ENCODE measurements at regions of chr3 and their contacts with region 1.

Region 1: DNA sequence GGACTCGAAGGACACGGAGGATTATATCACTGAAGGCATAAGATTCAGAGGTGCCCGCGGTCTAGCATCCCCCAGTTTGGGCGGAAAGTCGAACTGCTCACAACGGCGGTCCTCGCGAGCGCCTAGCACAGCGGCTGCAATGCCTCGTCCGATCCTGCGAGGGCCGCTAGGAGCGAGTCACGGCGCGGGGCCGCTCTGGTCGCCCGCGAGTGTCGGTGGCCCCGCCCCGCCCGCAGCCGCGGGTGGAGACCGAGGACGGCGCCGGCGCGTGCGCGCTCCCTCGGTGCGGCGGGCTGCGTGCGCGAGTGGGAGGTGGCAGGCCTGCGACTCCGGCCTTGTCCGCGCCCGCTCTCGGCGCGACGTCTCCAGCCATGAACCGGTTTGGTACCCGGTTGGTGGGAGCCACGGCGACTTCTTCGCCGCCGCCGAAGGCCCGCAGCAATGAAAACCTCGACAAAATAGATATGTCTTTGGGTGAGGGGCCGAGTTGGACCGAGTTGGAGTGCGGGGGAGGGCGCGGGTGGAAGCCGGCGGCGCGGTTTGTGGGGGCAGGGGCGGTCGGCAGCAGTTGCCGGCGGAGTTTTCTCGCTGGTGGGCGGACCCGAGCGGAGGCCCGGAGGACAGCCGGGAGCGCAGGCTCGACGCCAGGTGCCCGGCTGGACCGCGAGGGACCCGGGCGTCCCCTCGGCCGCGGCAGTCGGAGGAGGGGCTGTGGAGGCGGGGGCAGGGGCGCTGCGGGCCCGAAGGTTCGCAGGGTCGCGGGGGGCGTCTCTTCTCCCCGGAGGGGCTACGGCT is at the start of gene FYTTD1:
- DNase-seq: peak; percentile 50
- ATAC-seq: peak; percentile 91
- H3K4me3 ChIP-seq: peak within 1 kb of the TSS; percentile 75 to 86 (median 77)
- H3K27ac ChIP-seq: peak within 1 kb of the TSS; percentile 56
- H3K4me1 ChIP-seq: peaks cover 37% of the 10 kb centered on the region
- H3K27me3 ChIP-seq: peaks cover 0 to 5% of the 10 kb centered on the region in 2 experiments; a peak in 1 of 5 replicates
- CTCF ChIP-seq: peak; percentile 64
- EP300 ChIP-seq: 0 out of 4 replicates have a peak, but pooled peaks of 1 of the 2 experiments have one; percentile 7
- POLR2A ChIP-seq: peak; percentile 31 to 74; a peak in 3 of 4 replicates
- RAD21 ChIP-seq: peak; percentile 55
- total RNA-seq, gene FYTTD1: 28.8 and 51.6 TPM in 2 replicates

Region 2: GRCh38 chr3:197692641-197693040 is 57.2 kb before region 1 on chr3:
- CTCF ChIA-PET with region 1: no interaction called
- POLR2A ChIA-PET with region 1: no interaction called
- in situ Hi-C with region 1: no loop called
- intact Hi-C with region 1: no loop called
- DNase-seq: no peak
- ATAC-seq: no peak
- H3K4me3 ChIP-seq: no peak overlapping the region
- H3K27ac ChIP-seq: no peak overlapping the region
- H3K4me1 ChIP-seq: no peaks in the 10 kb centered on the region
- H3K27me3 ChIP-seq: no peaks in the 10 kb centered on the region
- CTCF ChIP-seq: no peak
- EP300 ChIP-seq: no peak
- POLR2A ChIP-seq: no peak
- RAD21 ChIP-seq: no peak

Region 3: GRCh38 chr3:197711973-197712707 is 37.7 kb before region 1 on chr3:
- CTCF ChIA-PET with region 1: no interaction called
- POLR2A ChIA-PET with region 1: no interaction called
- in situ Hi-C with region 1: no loop called
- intact Hi-C with region 1: no loop called
- DNase-seq: peak; percentile 28
- ATAC-seq: no peak
- H3K4me3 ChIP-seq: no peak overlapping the region
- H3K27ac ChIP-seq: no peak overlapping the region
- H3K4me1 ChIP-seq: no peaks in the 10 kb centered on the region
- H3K27me3 ChIP-seq: no peaks in the 10 kb centered on the region
- CTCF ChIP-seq: no peak
- EP300 ChIP-seq: no peak
- POLR2A ChIP-seq: no peak
- RAD21 ChIP-seq: no peak

Region 4: GRCh38 chr3:197791113-197791891 is 41.5 kb after region 1 on chr3 and contains the start of gene LRCH3:
- CTCF ChIA-PET with region 1: no interaction called
- POLR2A ChIA-PET with region 1: interaction called, 6 read pairs
- in situ Hi-C with region 1: no loop called
- intact Hi-C with region 1: loop called (anchors 5 kb)
- DNase-seq: peak; percentile 56
- ATAC-seq: peak; percentile 86
- H3K4me3 ChIP-seq: peak within 1 kb of the TSS; percentile 92 to 100 (median 96)
- H3K27ac ChIP-seq: peak within 1 kb of the TSS; percentile 93
- H3K4me1 ChIP-seq: peaks cover 52% of the 10 kb centered on the region
- H3K27me3 ChIP-seq: no peaks in the 10 kb centered on the region; a peak in 1 of 5 replicates
- CTCF ChIP-seq: no peak; the same call in none of the 2 replicates
- EP300 ChIP-seq: no peak
- POLR2A ChIP-seq: peak; percentile 93 to 99
- RAD21 ChIP-seq: no peak
- total RNA-seq, gene LRCH3: 25.5 and 37.8 TPM in 2 replicates

Region 5: DNA sequence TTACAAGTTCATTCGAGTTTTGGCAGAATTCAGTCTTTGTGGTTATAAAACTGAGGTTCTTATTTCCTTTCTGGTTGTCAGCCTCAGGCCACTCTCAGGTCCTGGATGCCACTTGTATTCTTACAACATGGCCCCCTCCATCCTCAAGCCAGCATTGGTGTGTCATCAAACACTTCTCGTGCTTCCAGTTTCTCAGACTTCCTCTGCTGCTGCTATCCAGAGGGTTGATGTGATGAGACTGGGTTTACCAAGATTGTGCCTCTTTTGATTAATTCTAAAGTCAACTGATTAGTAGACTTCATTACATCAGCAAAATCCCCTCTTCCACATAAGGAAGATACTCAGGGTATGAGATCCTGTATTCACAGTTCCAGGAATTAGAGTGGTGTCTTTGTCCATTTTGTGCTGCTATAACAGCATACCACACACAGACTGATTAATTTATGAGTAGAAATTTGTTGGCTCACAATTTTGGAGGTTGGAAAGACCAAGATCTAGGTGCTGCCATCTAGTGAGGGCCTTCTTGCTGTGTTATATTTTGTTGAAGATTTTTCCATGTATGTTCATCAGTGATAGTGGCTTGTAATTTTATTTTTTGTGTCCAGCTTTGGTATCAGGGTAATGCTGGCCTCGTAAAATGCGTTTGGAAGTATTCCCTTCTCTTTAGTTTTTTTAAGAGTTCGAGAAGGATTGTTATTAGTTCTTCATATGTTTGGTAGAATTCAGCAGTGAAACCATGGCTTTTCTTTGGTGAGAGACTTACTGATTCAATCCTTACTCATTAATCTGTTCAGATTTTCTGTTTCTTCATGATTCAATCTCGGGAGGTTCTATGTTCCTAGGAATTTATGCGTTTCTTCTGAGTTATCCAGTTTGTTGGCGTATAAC is 52.3 kb after region 1 on chr3:
- CTCF ChIA-PET with region 1: no interaction called
- POLR2A ChIA-PET with region 1: no interaction called
- in situ Hi-C with region 1: no loop called
- intact Hi-C with region 1: loop called (anchors 2 kb)
- DNase-seq: no peak
- ATAC-seq: peak; percentile 37; the same call in 2 of the 3 replicates
- H3K4me3 ChIP-seq: no peak overlapping the region
- H3K27ac ChIP-seq: no peak overlapping the region
- H3K4me1 ChIP-seq: peaks cover 10% of the 10 kb centered on the region; the same call in 1 of the 2 replicates
- H3K27me3 ChIP-seq: no peaks in the 10 kb centered on the region; a peak in 1 of 5 replicates
- CTCF ChIP-seq: 0 out of 2 replicates have a peak, but pooled peaks have one; percentile 13
- EP300 ChIP-seq: no peak
- POLR2A ChIP-seq: no peak
- RAD21 ChIP-seq: no peak

Region 6: DNA sequence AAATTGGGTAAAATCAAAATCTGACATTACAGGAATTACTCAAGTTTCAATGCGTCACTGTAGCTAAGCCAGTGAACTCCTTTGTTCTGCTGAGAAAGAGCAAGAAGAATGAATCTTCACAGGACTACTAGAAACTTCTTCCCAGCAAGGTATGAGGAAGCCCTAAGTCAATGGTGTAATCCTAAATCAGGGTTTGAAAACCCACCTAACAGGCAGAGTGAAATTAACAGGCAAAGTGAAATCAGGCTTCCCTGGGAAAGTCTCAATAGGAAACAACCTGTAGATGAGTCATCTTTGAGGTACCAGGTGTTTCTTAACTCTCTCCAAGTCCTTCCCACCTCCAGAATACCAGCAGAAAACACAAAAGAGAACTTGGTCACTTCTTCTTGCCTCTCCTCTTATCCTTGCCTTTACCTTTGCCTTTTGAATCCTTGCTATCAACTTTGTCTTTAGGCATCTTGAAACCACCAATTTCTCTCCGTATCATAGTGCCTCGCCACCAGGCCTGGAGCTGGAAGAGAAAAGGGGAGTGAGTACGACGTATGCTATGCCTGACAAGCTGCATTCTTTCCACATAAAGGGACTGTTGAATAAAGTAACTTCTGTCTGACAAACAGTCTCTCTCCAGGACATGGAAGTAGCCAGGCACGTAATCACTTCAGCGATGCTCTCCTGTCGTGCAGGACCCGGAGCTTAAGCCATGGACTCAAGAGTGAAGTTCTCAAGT is 139.6 kb after region 1 on chr3:
- CTCF ChIA-PET with region 1: no interaction called
- POLR2A ChIA-PET with region 1: no interaction called
- in situ Hi-C with region 1: no loop called
- intact Hi-C with region 1: no loop called
- DNase-seq: no peak
- ATAC-seq: no peak
- H3K4me3 ChIP-seq: no peak overlapping the region
- H3K27ac ChIP-seq: no peak overlapping the region
- H3K4me1 ChIP-seq: no peaks in the 10 kb centered on the region
- H3K27me3 ChIP-seq: no peaks in the 10 kb centered on the region
- CTCF ChIP-seq: no peak
- EP300 ChIP-seq: no peak
- POLR2A ChIP-seq: no peak
- RAD21 ChIP-seq: no peak